Transverse colon (tissue), 4 donors: ENCODE measurements at regions of chr10 and their contacts with region 1.

Region 1: GRCh38 chr10:4931587-4931986 is 31.6 kb upstream of the AKR1C1 start:
- DNase-seq: no peak
- H3K4me3 ChIP-seq: no peak overlapping the region
- H3K27ac ChIP-seq: no peak overlapping the region
- H3K4me1 ChIP-seq: peaks cover 0 to 8% (median 0%) of the 10 kb centered on the region in 4 donors
- H3K27me3 ChIP-seq: no peaks in the 10 kb centered on the region
- CTCF ChIP-seq: no peak
- EP300 ChIP-seq: no peak
- POLR2A ChIP-seq: no peak

Region 2: GRCh38 chr10:4947635-4948596 is 16.3 kb after region 1 on chr10:
- in situ Hi-C with region 1: no loop called
- intact Hi-C with region 1: no loop called
- DNase-seq: no peak
- H3K4me3 ChIP-seq: no peak overlapping the region
- H3K27ac ChIP-seq: peak overlapping the region; percentile 58 to 73 (median 70)
- H3K4me1 ChIP-seq: peaks cover 0 to 33% (median 15%) of the 10 kb centered on the region in 4 donors
- H3K27me3 ChIP-seq: no peaks in the 10 kb centered on the region
- CTCF ChIP-seq: no peak
- EP300 ChIP-seq: no peak
- POLR2A ChIP-seq: no peak

Region 3: DNA sequence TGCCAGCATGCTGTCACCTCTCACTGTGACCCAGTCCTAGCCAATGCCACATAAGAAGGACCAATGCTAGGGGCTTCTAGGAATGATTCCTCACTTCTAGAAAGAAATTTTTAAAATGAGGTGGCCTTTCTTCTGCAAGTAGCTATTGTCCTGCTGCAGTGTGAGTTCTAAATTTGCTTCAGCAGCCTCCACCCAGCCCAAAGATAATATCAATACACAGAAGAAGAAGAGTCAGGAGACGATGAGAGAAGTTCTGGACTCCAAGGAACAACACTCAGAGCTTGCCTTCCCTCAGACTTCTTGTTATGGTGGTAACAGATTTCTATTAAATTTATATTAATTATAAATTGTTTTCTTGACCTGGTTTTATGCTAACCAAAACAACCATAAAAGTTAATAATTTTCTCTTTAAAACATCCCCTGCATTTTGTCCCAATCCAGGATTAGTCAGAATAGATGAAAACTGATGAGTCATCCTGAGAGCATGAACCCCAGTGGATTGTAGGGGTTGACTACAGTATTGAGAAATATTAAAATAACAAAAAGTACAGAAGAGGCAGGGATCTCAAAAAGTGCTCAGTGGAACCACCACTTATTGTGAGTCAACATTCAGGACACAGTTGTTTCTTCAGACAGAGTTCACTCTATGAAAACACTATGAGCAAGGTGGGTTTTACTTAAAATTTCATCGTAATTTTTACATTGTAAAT is 101.6 kb after region 1 on chr10:
- in situ Hi-C with region 1: loop called in 1 of 4 experiments (anchors 5 kb)
- intact Hi-C with region 1: no loop called
- DNase-seq: no peak
- H3K4me3 ChIP-seq: no peak overlapping the region
- H3K27ac ChIP-seq: no peak overlapping the region
- H3K4me1 ChIP-seq: peaks cover 0 to 24% (median 8%) of the 10 kb centered on the region in 4 donors
- H3K27me3 ChIP-seq: no peaks in the 10 kb centered on the region
- CTCF ChIP-seq: no peak
- EP300 ChIP-seq: no peak
- POLR2A ChIP-seq: no peak